ENCODE measurements at regions of chr19 and their contacts with region 1.

Region 1: DNA sequence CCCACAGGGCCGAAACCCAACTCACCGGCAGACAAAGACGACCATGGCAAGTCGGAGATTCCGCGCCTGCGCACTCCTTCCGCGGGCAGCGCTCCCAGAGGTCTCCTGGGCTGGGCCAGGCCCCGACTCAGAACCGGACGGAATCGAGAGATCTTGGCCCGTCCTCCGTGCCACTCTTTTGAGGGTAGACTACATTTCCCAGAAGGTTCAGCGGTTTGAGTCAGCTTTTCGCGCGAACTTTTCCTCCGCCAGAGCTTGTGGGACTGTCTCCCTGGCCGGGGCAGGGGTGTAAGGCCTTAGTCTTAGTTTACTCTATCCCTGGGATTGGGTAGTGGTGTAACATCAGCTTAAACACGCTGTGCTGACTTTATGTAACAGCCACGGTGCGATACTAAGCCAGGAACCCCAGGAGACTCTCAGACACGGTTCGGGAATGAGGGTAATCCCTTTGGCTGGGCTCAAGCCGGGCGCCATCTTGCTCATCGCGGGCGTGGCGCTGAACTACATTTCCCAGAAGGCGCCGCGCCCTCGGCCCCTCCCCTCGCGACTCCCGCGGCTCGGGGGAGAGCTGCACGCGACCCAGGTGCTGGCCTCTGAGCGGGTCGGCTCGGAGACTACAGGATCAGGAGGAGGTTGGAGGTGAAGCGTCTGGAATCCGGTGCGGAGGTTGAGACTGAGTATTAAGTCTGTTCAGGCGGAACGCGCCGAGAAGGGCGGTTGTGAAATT is at the start of gene ZNF260:
- DNase-seq: peak; percentile 98
- H3K4me3 ChIP-seq: peak within 1 kb of the TSS; percentile 59 to 80 (median 70)
- H3K27ac ChIP-seq: peak within 1 kb of the TSS; percentile 91 to 92 (median 91)
- H3K4me1 ChIP-seq: peaks cover 0 to 21% (median 18%) of the 10 kb centered on the region in 4 donors
- H3K27me3 ChIP-seq: no peaks in the 10 kb centered on the region
- CTCF ChIP-seq: no peak
- EP300 ChIP-seq: peak in 1 of 4 donors; percentile 41
- POLR2A ChIP-seq: peak in 1 of 2 donors; percentile 33
- total RNA-seq, gene ZNF260: 5.7 to 11.9 (median 11.0) TPM

Region 2: DNA sequence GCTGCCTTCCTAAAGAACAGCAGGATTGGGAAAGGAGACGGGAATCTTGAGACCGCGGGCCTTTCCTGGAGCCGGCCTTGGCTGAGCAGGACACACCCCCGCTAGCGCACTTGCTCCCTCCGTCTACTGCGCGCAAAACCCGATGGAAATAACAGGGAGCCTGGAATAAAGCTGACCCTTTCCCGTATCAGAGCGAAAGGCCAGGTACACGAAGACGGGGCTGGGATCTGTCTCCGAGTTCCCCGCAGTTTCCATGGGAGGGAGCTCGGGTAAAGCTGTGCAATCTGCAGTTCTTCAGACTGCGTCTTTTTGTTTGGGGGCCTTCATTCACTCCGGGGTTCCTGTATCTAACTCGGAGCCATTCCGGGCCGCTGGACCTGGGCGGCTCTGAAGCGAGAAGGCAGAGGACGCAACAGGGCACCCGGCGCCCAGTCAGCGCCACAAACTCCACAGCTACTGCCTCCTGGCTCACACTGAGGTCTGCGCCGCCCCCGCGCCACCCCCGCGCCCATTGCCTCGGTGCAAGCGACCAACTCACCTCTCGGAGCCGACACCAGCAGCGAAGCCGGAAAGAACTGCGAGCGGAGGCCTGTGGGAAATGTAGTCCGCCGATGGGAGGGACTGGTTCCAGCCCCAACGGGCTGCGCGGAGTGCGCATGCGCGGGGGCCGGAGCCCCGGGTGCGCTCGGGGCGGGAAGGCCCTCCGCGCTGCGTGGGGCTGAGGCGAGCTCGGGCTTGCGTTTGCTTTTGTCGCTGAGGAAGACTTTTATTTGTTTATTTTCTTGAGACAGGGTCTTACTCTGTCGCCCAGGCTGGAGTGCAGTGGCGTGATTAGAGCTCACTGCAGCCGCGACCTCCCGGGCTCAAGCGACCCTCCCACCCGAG is 149.5 kb before region 1 on chr19 and contains the start of gene ZFP14:
- intact Hi-C with region 1: loop called (anchors 2 kb)
- DNase-seq: peak; percentile 95
- H3K4me3 ChIP-seq: peak within 1 kb of the TSS; percentile 70 to 79 (median 74)
- H3K27ac ChIP-seq: peak within 1 kb of the TSS; percentile 85 to 88 (median 86)
- H3K4me1 ChIP-seq: peaks cover 0 to 22% (median 13%) of the 10 kb centered on the region in 4 donors
- H3K27me3 ChIP-seq: no peaks in the 10 kb centered on the region
- CTCF ChIP-seq: no peak
- EP300 ChIP-seq: no peak
- POLR2A ChIP-seq: peak; percentile 72 to 80
- total RNA-seq, gene ZFP14: 3.5 to 13.3 (median 7.6) TPM

Region 3: DNA sequence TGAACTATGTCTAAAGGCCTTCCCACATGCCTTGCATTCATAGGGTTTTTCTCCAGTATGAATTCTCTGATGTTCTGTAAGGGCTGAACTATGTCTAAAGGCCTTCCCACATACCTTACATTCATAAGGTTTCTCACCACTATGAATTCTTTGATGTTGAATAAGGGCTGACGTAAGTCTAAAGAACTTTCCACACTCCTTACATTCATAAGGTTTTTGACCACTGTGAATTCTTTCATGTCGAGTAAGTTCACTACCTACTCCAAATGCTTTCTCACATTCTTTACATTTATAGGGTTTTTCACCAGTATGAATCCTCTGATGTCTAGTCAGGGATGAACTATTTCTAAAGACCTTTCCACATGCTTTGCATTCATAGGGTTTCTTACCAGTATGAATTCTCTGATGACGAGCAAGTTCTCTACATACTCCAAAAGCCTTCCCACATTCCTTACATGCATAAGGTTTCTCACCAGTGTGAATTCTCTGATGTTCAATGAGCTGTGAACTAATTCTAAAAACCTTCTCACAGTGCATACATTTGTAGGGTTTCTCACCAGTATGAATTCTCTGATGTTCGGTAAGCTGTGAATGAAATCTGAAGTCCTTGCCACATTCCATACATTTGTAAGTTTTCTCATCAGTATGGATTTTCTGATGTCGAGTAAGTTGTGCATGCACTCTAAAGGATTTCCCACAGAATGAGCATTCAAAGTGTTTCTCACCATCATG is 18.8 kb after region 1 on chr19:
- intact Hi-C with region 1: no loop called
- DNase-seq: no peak
- H3K4me3 ChIP-seq: no peak overlapping the region
- H3K27ac ChIP-seq: no peak overlapping the region
- H3K4me1 ChIP-seq: no peaks in the 10 kb centered on the region
- H3K27me3 ChIP-seq: no peaks in the 10 kb centered on the region
- CTCF ChIP-seq: no peak
- EP300 ChIP-seq: no peak
- POLR2A ChIP-seq: no peak

Region 4: DNA sequence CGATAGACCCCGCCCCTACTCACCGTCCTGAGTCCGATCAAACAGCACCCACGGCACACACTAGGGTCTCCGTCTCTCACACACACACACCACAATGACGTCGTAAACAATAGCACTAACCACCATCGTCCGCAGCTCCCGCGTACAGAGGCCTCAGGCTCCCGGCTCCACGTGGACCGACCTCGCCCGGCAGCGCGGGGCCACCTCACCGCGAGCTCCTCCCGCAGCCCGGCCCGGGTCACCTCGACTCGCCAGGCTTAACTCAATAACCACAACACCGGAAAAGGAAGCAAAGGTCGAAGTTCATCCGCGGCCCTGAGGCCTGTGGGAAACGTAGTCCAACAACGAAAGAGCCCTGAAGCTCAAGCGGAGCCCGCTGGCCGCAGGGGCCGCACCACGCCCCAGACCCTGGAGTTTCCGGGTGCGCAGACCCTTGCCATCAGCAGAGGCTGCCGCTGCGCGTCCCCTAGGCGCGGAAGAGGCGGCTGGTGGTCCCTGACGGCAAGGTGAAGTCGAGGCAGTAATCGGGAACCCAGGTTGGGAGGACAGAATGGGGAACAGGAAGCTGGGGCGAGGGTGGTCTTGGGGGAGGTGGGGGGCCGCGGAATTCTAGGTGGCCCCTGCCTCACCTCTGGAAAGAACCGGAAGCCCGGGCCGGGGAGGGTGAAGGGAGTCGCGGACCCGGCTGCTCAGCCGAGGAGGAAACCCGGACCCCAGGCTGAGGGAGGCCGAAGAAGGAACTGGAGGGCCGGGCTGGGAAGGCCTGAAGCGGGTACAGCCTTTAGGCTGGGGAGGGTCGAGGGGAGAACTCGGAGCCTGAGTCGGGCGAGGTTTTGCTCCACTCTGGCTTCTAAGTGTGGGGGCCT is 44.9 kb after region 1 on chr19 and contains the start of gene ZNF529:
- intact Hi-C with region 1: loop called (anchors 5 kb)
- DNase-seq: peak; percentile 91
- H3K4me3 ChIP-seq: peak within 1 kb of the TSS; percentile 62 to 93 (median 86)
- H3K27ac ChIP-seq: peak within 1 kb of the TSS; percentile 79 to 89 (median 84)
- H3K4me1 ChIP-seq: peaks cover 0 to 24% (median 18%) of the 10 kb centered on the region in 4 donors
- H3K27me3 ChIP-seq: no peaks in the 10 kb centered on the region
- CTCF ChIP-seq: no peak
- EP300 ChIP-seq: no peak
- POLR2A ChIP-seq: peak; percentile 43 to 54
- total RNA-seq, gene ZNF529: 14.2 to 25.2 (median 20.2) TPM

Region 5: DNA sequence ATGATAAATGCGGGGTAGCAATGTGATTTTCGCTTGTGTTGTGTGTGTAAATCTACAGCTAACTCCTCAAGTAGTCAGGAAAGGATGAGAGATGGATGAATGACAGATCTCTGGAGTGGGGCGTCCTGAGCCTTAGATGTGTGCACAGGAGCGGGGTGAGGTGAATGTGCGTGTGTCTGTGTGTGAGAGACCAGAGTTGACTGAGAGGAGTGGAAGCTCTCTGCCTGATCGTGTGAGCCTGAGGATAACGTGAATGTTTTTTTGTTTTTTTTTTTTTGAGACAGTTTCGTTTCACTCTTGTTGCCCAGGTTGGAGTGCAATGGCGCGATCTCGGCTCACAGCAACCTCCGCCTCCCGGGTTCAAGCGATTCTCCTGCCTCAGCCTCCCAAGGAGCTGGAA is 137.5 kb after region 1 on chr19:
- intact Hi-C with region 1: loop called (anchors 1 kb)
- DNase-seq: no peak
- H3K4me3 ChIP-seq: peak overlapping the region; percentile 66 to 86 (median 76)
- H3K27ac ChIP-seq: no peak overlapping the region
- H3K4me1 ChIP-seq: peaks cover 0 to 21% (median 17%) of the 10 kb centered on the region in 4 donors
- H3K27me3 ChIP-seq: no peaks in the 10 kb centered on the region
- CTCF ChIP-seq: no peak
- EP300 ChIP-seq: no peak
- POLR2A ChIP-seq: no peak

Region 6: DNA sequence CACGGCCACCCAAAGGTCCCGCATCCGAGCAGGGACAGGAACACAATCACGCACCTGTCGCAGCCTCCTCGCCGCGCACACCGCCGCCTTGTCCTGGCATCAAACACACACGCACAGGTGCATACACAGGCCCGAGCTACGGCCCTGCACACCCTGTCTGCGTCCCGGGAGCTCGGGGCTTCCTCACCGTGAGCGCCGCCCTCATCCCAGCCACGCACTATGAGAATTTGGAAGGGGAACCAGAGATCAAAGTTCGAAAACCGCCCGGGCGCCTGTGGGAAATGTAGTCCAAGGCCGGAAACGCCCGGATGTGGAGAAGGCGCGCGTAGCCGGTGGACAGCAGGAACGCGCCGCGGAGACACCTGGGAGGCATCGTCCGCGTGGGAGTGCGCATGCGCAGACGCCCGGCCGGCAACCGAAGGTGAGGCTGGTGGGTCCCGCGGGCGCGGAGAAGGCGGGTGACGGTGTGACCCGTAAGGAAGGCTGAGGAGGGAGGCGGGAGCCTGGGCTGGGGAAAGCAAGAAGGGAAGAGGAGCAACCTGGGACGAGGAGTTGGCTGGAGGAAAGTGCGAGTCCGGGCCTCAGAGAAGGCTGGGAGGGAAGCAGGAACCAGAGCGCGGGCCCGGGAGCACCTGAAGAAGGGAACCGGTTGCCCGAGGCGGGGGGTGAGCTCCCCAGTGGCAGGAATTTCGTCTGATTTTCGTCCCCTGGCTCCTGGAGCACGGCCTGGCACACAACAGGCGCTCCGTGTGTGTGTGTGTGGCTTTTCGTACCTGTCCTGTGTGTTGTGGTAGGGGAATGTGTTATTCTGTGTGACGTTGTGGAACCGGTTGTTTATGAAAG is 159.1 kb after region 1 on chr19 and contains the start of gene ZNF567:
- intact Hi-C with region 1: loop called (anchors 5 kb)
- DNase-seq: peak; percentile 98
- H3K4me3 ChIP-seq: peak within 1 kb of the TSS; percentile 64 to 83 (median 78)
- H3K27ac ChIP-seq: peak within 1 kb of the TSS; percentile 71 to 77 (median 76)
- H3K4me1 ChIP-seq: peaks cover 0 to 22% (median 17%) of the 10 kb centered on the region in 4 donors
- H3K27me3 ChIP-seq: no peaks in the 10 kb centered on the region
- CTCF ChIP-seq: no peak
- EP300 ChIP-seq: peak in 1 of 4 donors; percentile 27
- POLR2A ChIP-seq: peak; percentile 39 to 53
- total RNA-seq, gene ZNF567: 7.2 to 13.9 (median 11.0) TPM